ENCODE measurements at regions of chr6 and their contacts with region 1.

Region 1: DNA sequence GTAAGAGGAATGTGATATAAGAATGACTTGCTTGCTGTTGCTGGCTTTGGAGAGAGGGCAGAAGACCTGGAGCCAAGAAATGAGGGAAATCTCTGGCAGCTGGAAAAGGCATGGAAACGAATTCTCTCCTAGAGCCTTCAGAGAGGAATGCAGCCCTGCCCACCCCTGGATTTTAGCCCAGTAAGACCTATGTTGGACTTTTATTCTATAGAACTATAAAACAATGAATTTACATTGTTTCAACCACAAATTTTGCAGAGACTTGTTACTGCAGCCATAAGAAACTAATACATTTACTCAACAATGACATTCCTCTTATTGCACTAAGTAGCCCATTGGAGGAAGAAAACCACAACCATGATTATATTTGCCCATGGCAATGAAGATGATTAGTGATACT is 39.5 kb upstream of the PREP start:
- DNase-seq: no peak
- ATAC-seq: no peak
- H3K4me3 ChIP-seq: no peak overlapping the region
- H3K27ac ChIP-seq: no peak overlapping the region
- H3K4me1 ChIP-seq: no peaks in the 10 kb centered on the region
- CTCF ChIP-seq: no peak
- EP300 ChIP-seq: no peak
- POLR2A ChIP-seq: no peak
- RAD21 ChIP-seq: no peak

Region 2: GRCh38 chr6:106125925-106126435 is 683.6 kb after region 1 on chr6:
- CTCF ChIA-PET with region 1: no interaction called
- POLR2A ChIA-PET with region 1: interaction called, 10 read pairs
- DNase-seq: no peak
- ATAC-seq: no peak
- H3K4me3 ChIP-seq: no peak overlapping the region
- H3K27ac ChIP-seq: no peak overlapping the region
- H3K4me1 ChIP-seq: peaks cover 17% of the 10 kb centered on the region; the same call in 2 of the 3 replicates
- CTCF ChIP-seq: no peak
- EP300 ChIP-seq: no peak
- POLR2A ChIP-seq: no peak
- RAD21 ChIP-seq: no peak